Upper lobe of right lung (tissue), 1 donor: ENCODE measurements at regions of chr19 and their contacts with region 1.

Region 1: GRCh38 chr19:46990991-46991676 is 28.5 kb upstream of the NPAS1 start:
- DNase-seq: peak; percentile 84
- ATAC-seq: peak; percentile 80
- H3K4me3 ChIP-seq: no peak overlapping the region
- H3K27ac ChIP-seq: peak overlapping the region; percentile 60
- H3K4me1 ChIP-seq: peaks cover 32% of the 10 kb centered on the region
- H3K27me3 ChIP-seq: no peaks in the 10 kb centered on the region
- CTCF ChIP-seq: peak; percentile 85

Region 2: GRCh38 chr19:46856050-46857022 is 134.8 kb before region 1 on chr19:
- intact Hi-C with region 1: loop called (anchors 5 kb)
- DNase-seq: peak; percentile 97
- ATAC-seq: peak; percentile 81
- H3K4me3 ChIP-seq: peak overlapping the region; percentile 37
- H3K27ac ChIP-seq: peak overlapping the region; percentile 86
- H3K4me1 ChIP-seq: peaks cover 19% of the 10 kb centered on the region
- H3K27me3 ChIP-seq: no peaks in the 10 kb centered on the region
- CTCF ChIP-seq: peak; percentile 75

Region 3: DNA sequence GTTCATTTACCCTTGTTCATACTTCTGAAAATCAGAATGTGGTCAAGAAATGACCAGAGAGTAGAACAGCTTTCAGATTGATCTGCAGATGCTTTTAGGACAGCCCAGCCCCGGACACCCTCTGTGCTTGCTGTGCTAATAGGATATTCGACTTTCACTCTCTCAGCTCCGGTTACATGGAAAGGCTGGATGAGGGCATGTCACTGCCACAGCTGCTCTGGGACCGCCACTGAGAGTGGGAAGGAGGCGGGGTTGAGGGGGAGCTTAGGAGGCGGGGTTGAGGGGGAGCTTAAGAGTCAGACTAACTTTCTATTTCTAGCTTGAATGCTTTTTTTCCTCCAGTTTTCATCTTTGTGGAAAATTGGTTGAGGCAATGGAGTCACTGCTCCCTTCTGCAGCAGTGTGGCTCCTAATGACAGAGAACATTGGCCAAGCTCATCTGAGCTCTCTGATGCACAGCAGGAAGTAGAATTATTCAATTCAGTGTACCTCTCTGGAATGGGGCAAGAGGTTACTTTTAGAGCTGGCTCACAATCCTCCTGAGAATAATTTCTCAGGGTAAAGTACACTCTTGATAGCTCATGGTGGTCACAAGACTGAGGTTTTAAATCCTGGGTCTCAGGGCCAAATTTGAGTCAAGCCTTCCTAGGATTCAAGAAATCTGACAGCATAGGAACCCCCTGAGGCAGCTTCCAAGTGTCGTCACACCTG is 46.1 kb before region 1 on chr19:
- intact Hi-C with region 1: no loop called
- DNase-seq: no peak
- ATAC-seq: peak; percentile 78
- H3K4me3 ChIP-seq: no peak overlapping the region
- H3K27ac ChIP-seq: peak overlapping the region; percentile 44
- H3K4me1 ChIP-seq: peaks cover 42% of the 10 kb centered on the region
- H3K27me3 ChIP-seq: no peaks in the 10 kb centered on the region
- CTCF ChIP-seq: no peak

Region 4: DNA sequence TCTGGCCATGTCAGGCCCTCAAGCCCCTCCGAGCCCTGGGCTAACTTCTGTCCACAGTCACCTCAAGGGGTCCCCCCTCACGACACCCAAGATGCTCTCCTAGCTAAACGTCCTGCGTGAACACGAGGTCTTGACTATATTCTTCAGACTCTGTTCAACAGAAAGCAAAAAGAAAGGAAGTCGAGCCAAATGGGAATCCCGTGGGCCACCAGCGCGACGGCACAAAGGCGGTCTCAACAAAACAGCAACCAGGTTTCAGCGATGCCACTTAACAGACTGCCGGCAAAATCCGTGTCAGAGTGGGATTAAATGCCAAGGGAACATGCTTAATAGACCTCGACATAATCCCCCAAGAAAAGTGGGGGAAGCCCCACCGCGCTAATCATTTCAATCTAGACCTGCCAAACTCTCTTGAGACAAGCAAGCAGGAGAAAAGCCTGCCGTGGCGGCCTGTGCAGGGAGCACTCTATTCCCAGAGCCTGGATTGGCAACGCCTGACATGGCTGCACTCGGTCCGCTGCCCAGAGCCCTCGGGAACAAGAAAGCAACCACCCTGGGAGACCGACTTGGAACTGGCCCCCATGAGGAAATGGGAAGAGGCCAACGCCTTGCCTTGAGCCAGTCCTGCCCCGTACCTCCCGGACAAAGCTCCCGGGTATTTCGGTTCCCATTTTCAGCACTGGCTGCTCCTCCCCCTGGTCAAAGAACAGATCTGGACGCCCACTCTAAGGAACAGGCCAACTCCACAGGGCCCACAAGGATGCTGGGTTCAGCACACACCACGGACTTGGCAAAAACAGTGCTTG is 106.5 kb after region 1 on chr19:
- intact Hi-C with region 1: no loop called
- DNase-seq: no peak
- ATAC-seq: peak; percentile 53
- H3K4me3 ChIP-seq: no peak overlapping the region
- H3K27ac ChIP-seq: peak overlapping the region; percentile 90
- H3K4me1 ChIP-seq: peaks cover 52% of the 10 kb centered on the region
- H3K27me3 ChIP-seq: no peaks in the 10 kb centered on the region
- CTCF ChIP-seq: no peak